PC-9 (cell line): ENCODE measurements at regions of chr7 and their contacts with region 1.

Region 1: DNA sequence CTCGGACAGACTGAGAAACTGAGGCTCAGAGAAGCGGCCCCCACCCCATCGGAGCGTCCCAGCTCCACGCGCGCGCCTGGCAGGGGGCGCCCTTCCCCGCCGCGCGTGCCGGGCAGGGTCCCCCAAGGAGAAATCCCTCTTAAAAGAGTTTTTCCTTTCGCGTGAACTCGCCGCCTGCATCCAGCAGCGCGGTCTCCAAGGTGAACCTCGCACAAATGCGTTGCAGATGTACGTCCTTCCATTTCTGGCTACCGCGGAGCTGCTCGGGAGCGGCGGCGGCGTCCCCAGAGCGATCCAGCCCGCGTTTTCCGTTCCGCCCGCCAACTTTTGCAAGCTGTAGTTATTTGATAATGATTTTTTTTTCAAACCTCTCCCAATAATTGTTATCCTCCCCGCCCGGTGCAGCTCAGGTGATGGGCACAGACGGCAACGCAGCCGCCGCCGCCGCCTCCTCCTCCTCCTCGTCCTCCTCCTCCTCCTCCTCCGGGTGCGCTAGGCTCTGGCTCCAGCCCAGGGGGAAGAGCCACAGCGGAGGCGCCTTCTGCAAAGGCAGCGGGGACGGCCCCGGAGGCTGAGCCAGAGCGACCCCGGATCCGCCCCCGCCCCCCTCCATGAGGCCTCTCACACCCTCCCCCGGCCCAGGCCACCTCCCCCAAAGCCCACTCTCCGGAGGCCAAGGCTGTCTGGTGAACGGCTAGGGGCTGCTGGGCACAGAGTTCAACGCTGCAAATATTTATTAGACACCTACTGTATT is 74.0 kb upstream of the CUX1 start:
- DNase-seq: peak; percentile 52 to 66
- H3K4me3 ChIP-seq: peak overlapping the region; percentile 63
- H3K27ac ChIP-seq: no peak overlapping the region
- H3K4me1 ChIP-seq: peaks cover 28% of the 10 kb centered on the region
- H3K27me3 ChIP-seq: no peaks in the 10 kb centered on the region
- CTCF ChIP-seq: peak; percentile 51

Region 2: GRCh38 chr7:101681170-101682007 is 62.0 kb before region 1 on chr7:
- CTCF ChIA-PET with region 1: no interaction called
- POLR2A ChIA-PET with region 1: interaction called, 11 read pairs
- intact Hi-C with region 1: no loop called
- DNase-seq: peak; percentile 62 to 84
- H3K4me3 ChIP-seq: no peak overlapping the region
- H3K27ac ChIP-seq: no peak overlapping the region
- H3K4me1 ChIP-seq: peaks cover 13% of the 10 kb centered on the region
- H3K27me3 ChIP-seq: no peaks in the 10 kb centered on the region
- CTCF ChIP-seq: no peak

Region 3: DNA sequence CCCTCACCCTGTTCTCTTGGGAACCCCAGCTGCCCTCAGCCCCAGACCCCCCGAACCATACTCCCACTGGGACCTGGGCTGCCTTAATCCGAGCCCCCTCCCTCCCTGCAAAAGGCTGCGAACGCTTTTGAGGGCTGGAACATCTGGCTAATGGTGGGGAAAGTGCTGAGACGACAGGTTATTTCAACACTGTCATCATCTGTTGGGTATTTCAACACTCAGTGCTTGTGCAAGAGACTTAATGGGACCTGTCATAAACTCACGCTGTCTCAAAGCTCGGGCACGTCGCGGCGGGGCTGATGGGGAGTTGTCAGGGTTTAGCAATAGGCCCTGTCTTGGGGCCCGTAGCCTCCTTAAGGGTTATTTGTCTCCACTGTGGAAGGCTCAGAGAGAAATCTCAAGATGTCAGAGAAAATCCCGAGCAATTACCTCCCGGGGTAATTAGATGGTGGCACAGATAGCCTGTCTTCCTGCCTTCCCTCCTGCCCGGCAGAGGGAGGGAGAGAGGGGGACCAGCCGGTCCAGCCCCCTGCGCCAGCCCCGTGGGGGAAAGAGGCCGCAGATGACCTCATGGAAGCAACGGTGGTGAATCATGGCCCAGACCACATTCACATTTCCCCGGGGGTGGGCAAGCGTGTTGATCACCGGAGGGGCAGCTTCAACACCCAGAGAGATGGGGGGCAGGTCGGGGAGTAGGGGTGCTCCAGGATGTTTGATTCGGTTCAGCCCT is 25.6 kb before region 1 on chr7:
- CTCF ChIA-PET with region 1: interaction called, 12 read pairs
- POLR2A ChIA-PET with region 1: interaction called, 3 read pairs
- intact Hi-C with region 1: no loop called
- DNase-seq: peak; percentile 42 to 84
- H3K4me3 ChIP-seq: peak overlapping the region; percentile 35; the same call in 1 of the 2 replicates
- H3K27ac ChIP-seq: peak overlapping the region; percentile 19
- H3K4me1 ChIP-seq: peaks cover 17% of the 10 kb centered on the region
- H3K27me3 ChIP-seq: no peaks in the 10 kb centered on the region
- CTCF ChIP-seq: no peak

Region 4: DNA sequence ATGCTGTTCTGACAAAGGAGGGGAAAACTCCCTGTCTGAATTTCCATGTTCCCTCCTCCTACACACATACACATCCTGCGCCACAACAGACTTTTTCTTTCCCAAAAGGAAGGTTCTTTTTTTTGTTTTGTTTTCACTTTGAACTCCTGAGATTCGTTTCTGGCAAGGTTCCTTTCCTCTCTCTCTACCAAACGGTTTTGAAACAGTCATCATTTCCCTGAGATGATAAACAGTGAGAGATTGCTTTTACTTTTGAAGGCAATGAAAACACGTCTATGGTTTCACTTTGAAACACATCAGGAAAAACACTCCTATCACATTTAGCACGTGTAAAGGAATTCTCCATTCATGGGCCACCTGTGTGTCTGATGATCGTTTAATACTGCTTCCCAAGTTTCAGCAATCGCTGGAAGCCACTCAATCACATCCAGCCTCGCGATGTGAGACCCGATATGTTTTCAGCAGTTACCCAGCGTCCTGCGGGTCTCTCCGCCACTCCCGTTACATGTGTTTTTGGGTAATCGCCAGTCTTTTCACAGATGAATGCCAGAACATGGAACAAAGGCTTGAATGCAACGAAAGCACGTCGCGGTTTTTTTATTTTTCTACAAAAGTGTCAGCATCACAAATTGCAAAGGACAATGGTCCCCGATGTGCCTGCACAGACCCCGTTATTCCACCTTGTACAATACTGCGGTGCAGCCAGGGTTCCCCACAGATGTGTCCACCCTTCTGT is 11.2 kb after region 1 on chr7:
- CTCF ChIA-PET with region 1: no interaction called
- POLR2A ChIA-PET with region 1: no interaction called
- intact Hi-C with region 1: no loop called
- DNase-seq: no peak
- H3K4me3 ChIP-seq: peak overlapping the region; percentile 26; the same call in 1 of the 2 replicates
- H3K27ac ChIP-seq: no peak overlapping the region
- H3K4me1 ChIP-seq: no peaks in the 10 kb centered on the region
- H3K27me3 ChIP-seq: no peaks in the 10 kb centered on the region
- CTCF ChIP-seq: no peak

Region 5: GRCh38 chr7:101792051-101792681 is 48.7 kb after region 1 on chr7:
- CTCF ChIA-PET with region 1: interaction called, 4 read pairs
- POLR2A ChIA-PET with region 1: no interaction called
- intact Hi-C with region 1: loop called (anchors 5 kb)
- DNase-seq: peak; percentile 66 to 84
- H3K4me3 ChIP-seq: no peak overlapping the region; the same call in 1 of the 2 replicates
- H3K27ac ChIP-seq: peak overlapping the region; percentile 89
- H3K4me1 ChIP-seq: peaks cover 21% of the 10 kb centered on the region
- H3K27me3 ChIP-seq: no peaks in the 10 kb centered on the region
- CTCF ChIP-seq: no peak